ENCODE measurements at regions of chr3 and their contacts with region 1.

Region 1: GRCh38 chr3:11379233-11379823 is 107.1 kb downstream of the ATG7 start:
- DNase-seq: peak; percentile 79
- ATAC-seq: peak; percentile 73
- H3K4me3 ChIP-seq: no peak overlapping the region
- H3K27ac ChIP-seq: no peak overlapping the region
- H3K4me1 ChIP-seq: no peaks in the 10 kb centered on the region
- H3K27me3 ChIP-seq: no peaks in the 10 kb centered on the region
- CTCF ChIP-seq: peak; percentile 86

Region 2: GRCh38 chr3:11350374-11350773 is 29.0 kb before region 1 on chr3:
- CTCF ChIA-PET with region 1: no interaction called
- POLR2A ChIA-PET with region 1: no interaction called
- intact Hi-C with region 1: no loop called
- DNase-seq: peak; percentile 73
- ATAC-seq: peak; percentile 75
- H3K4me3 ChIP-seq: no peak overlapping the region
- H3K27ac ChIP-seq: peak overlapping the region; percentile 69
- H3K4me1 ChIP-seq: peaks cover 36% of the 10 kb centered on the region
- H3K27me3 ChIP-seq: no peaks in the 10 kb centered on the region
- CTCF ChIP-seq: no peak

Region 3: GRCh38 chr3:11523572-11524101 is 144.3 kb after region 1 on chr3:
- CTCF ChIA-PET with region 1: no interaction called
- POLR2A ChIA-PET with region 1: no interaction called
- intact Hi-C with region 1: loop called (anchors 5 kb)
- DNase-seq: no peak
- ATAC-seq: no peak
- H3K4me3 ChIP-seq: no peak overlapping the region
- H3K27ac ChIP-seq: peak overlapping the region; percentile 91
- H3K4me1 ChIP-seq: peaks cover 34% of the 10 kb centered on the region
- H3K27me3 ChIP-seq: no peaks in the 10 kb centered on the region
- CTCF ChIP-seq: no peak

Region 4: GRCh38 chr3:11539677-11540076 is 160.3 kb after region 1 on chr3:
- CTCF ChIA-PET with region 1: interaction called, 15 read pairs
- POLR2A ChIA-PET with region 1: no interaction called
- intact Hi-C with region 1: loop called (anchors 1 kb)
- DNase-seq: peak; percentile 89
- ATAC-seq: peak; percentile 99
- H3K4me3 ChIP-seq: no peak overlapping the region
- H3K27ac ChIP-seq: no peak overlapping the region
- H3K4me1 ChIP-seq: peaks cover 12% of the 10 kb centered on the region
- H3K27me3 ChIP-seq: no peaks in the 10 kb centered on the region
- CTCF ChIP-seq: peak; percentile 80

Region 5: DNA sequence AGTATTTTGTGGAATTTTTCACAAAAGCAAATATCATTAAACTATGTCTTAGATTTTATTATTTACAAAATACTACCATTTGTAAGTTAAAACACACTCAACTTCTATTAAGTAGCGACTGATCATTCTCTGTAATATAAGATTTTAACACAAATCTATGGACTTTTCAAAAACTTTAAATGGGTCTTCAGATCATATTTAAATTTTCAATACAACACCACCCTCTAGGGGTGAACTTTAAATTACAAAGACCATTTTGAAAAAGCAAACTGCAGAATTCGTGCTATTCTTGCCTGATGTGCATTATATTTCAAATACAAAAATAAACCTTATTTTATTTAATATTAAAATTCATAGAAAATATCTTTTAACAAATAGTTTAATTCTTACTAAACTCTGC is 272.6 kb after region 1 on chr3:
- CTCF ChIA-PET with region 1: interaction called, 3 read pairs
- POLR2A ChIA-PET with region 1: no interaction called
- intact Hi-C with region 1: loop called (anchors 1 kb)
- DNase-seq: peak; percentile 70
- ATAC-seq: no peak
- H3K4me3 ChIP-seq: no peak overlapping the region
- H3K27ac ChIP-seq: no peak overlapping the region
- H3K4me1 ChIP-seq: no peaks in the 10 kb centered on the region
- H3K27me3 ChIP-seq: no peaks in the 10 kb centered on the region
- CTCF ChIP-seq: peak; percentile 66

Region 6: DNA sequence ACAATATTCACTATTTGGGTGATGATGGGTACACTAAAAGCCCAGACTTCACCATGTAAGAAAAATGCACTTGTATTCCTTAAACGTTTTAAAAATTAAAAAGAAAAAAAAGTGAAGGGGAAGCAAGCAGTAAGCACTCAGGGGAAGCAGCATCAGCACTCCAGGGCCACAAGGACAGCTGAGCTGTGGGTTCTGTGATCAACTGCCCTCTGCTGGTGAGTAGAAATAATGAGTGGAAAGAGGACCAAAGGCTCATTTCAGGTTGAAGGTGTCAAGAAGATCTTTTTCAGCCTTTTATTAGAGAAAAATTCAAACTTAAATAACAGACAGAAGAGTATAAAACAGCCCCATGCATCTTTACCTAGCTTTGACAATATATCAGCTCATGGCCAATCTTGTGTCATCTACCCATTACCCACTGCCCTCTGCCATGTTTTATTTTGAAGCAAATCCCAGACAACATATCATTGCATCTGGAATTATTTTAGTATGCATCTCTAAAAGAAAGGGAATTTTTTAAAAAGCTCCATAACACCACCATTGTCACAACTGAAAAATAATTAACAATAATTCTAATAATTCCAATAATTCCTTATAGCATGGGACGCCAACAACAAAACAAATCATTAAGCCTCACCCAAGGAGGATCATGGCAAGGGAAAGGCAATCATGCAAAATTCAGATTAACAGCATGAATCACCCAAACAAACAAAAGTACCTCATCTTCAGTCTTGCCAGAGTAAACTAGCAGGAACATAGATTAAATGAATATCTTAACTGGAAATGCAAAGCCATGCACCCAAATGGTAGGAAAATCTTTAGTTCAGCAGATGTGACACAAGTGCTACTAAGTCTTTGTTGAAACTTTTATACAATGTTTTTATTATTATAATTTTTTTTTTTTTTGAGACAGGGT is 424.9 kb after region 1 on chr3:
- CTCF ChIA-PET with region 1: no interaction called
- POLR2A ChIA-PET with region 1: no interaction called
- intact Hi-C with region 1: loop called (anchors 5 kb)
- DNase-seq: peak; percentile 67
- ATAC-seq: peak; percentile 82
- H3K4me3 ChIP-seq: no peak overlapping the region
- H3K27ac ChIP-seq: no peak overlapping the region
- H3K4me1 ChIP-seq: no peaks in the 10 kb centered on the region; the same call in 1 of the 2 replicates
- H3K27me3 ChIP-seq: no peaks in the 10 kb centered on the region
- CTCF ChIP-seq: peak; percentile 87

Region 7: DNA sequence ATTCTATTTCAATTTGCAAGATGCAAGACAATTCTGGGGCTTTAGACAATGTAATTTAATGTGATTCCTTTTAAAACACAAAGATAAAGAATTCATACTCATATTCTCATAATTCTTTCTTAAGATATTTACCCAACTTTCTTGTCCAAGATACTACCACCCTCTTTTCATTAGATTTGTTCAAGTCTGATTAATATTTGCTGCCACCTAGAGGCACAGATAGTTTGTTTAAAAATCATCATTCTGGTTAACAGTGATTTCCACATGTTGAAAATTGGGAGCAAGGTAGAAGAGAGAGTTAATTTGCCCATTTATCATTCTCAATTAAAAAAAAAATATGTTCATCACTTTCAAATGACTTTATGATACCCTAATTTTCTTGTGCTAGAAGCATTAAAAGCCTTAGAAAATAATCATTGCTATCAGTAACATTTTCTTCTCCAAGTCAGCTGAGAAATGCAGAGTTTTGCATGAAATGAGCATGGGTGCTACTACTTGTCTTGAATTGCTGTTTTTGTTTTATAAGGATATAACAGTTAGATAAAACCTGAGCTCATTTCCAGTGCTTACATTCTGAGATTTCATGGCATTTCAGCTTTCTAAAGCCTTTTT is 455.8 kb after region 1 on chr3:
- CTCF ChIA-PET with region 1: no interaction called
- POLR2A ChIA-PET with region 1: no interaction called
- intact Hi-C with region 1: loop called (anchors 1 kb)
- DNase-seq: peak; percentile 66
- ATAC-seq: 0 out of 2 replicates have a peak, but pooled peaks have one; percentile 58
- H3K4me3 ChIP-seq: no peak overlapping the region
- H3K27ac ChIP-seq: no peak overlapping the region
- H3K4me1 ChIP-seq: no peaks in the 10 kb centered on the region
- H3K27me3 ChIP-seq: no peaks in the 10 kb centered on the region
- CTCF ChIP-seq: peak; percentile 80

Measured in PC-3 (cell line).